ENCODE measurements at regions of chr19 and their contacts with region 1.

Region 1: DNA sequence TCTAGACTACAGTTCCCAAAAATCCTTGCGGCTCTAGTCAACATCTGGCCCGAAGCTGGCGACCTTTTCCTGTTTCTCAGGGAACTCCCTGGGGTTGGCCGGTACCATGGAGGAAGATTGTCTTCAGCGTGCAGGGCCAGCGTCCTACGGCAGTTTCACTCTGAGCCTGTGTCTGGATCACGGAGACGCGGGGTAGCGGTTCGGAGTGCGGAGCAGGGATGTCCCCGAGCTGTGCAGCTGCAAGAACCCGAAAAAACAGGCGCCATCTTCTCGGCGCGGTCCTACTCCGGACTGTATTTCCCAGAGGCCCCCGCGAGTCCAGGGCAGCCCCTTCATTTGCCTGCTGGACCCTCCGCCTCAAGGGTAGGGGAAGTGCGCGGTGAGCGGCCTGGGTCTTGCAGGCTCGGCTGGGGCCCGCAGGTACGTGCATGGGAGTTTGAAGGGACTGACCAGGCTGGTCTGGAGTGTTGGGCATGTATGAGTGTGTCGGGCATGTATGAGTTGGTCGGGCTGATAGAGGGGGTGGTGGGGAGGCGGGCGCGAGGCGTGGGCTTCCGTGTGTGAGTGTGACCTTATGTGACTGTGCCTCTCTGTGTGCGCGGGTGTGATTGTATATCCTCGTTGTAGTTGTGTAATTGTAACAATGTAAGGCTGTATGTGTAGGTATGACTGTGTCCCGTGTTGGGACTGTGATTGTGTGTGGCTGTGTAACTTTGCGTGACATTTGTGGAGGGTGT is at the start of gene ZNF383:
- DNase-seq: peak; percentile 95
- H3K4me3 Mint-ChIP-seq: peak within 1 kb of the TSS; percentile 97
- H3K27ac Mint-ChIP-seq: peak within 1 kb of the TSS; percentile 94
- H3K4me1 Mint-ChIP-seq: peaks cover 16% of the 10 kb centered on the region
- H3K27me3 Mint-ChIP-seq: no peaks in the 10 kb centered on the region
- total RNA-seq, gene ZNF383: 6.4 and 8.6 TPM in 2 replicates

Region 2: GRCh38 chr19:36489118-36489919 is 728.7 kb before region 1 on chr19 and contains the start of gene ZNF566:
- intact Hi-C with region 1: loop called (anchors 5 kb)
- DNase-seq: peak; percentile 97
- H3K4me3 Mint-ChIP-seq: peak within 1 kb of the TSS; percentile 99
- H3K27ac Mint-ChIP-seq: peak within 1 kb of the TSS; percentile 99
- H3K4me1 Mint-ChIP-seq: peaks cover 23% of the 10 kb centered on the region
- H3K27me3 Mint-ChIP-seq: no peaks in the 10 kb centered on the region
- total RNA-seq, gene ZNF566: 7.2 and 8.5 TPM in 2 replicates

Region 3: GRCh38 chr19:36605101-36605876 is 612.7 kb before region 1 on chr19 and contains the start of gene ZNF382:
- intact Hi-C with region 1: loop called (anchors 10 kb)
- DNase-seq: peak; percentile 96
- H3K4me3 Mint-ChIP-seq: peak within 1 kb of the TSS; percentile 89
- H3K27ac Mint-ChIP-seq: peak within 1 kb of the TSS; percentile 98
- H3K4me1 Mint-ChIP-seq: peaks cover 22% of the 10 kb centered on the region
- H3K27me3 Mint-ChIP-seq: no peaks in the 10 kb centered on the region
- total RNA-seq, gene ZNF382: 9.5 and 13.2 TPM in 2 replicates

Region 4: GRCh38 chr19:36837906-36838783 is 379.9 kb before region 1 on chr19 and contains the start of gene ZNF790:
- intact Hi-C with region 1: loop called (anchors 5 kb)
- DNase-seq: peak; percentile 94
- H3K4me3 Mint-ChIP-seq: no peak within 1 kb of the TSS
- H3K27ac Mint-ChIP-seq: peak within 1 kb of the TSS; percentile 49
- H3K4me1 Mint-ChIP-seq: peaks cover 4% of the 10 kb centered on the region
- H3K27me3 Mint-ChIP-seq: no peaks in the 10 kb centered on the region
- total RNA-seq, gene ZNF790: 5.1 and 6.7 TPM in 2 replicates

Region 5: GRCh38 chr19:36915992-36916830 is 301.8 kb before region 1 on chr19 and contains the starts of genes ZNF568 and ZNF829:
- intact Hi-C with region 1: loop called (anchors 1 kb)
- DNase-seq: peak; percentile 97
- H3K4me3 Mint-ChIP-seq: peak within 1 kb of the TSS; percentile 90
- H3K27ac Mint-ChIP-seq: peak within 1 kb of the TSS; percentile 96
- H3K4me1 Mint-ChIP-seq: peaks cover 19% of the 10 kb centered on the region
- H3K27me3 Mint-ChIP-seq: no peaks in the 10 kb centered on the region
- total RNA-seq, gene ZNF568: 4.4 and 6.1 TPM in 2 replicates
- total RNA-seq, gene ZNF829: 4.8 TPM in 2 replicates

Region 6: DNA sequence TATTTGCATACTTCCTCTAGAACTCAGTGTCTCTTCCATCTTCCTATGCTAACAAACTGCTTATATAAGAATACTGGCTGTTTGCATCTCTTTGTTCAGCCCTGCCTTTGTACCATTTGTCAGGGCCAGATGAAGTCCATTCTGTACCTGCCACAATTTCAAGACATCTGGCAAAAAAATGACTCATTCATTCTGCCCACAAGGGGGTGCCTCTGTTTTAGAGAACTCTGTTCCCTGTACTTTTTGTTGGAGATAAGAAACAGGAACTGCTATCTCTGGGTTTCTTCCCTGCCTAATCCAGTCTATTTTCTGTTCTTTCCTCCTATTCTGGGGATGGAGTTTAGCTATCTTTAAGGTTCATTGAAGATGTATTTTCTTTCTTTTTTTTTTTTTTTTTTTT is 278.9 kb before region 1 on chr19:
- intact Hi-C with region 1: no loop called
- DNase-seq: no peak
- H3K4me3 Mint-ChIP-seq: no peak overlapping the region
- H3K27ac Mint-ChIP-seq: no peak overlapping the region
- H3K4me1 Mint-ChIP-seq: no peaks in the 10 kb centered on the region
- H3K27me3 Mint-ChIP-seq: no peaks in the 10 kb centered on the region

Region 7: GRCh38 chr19:37172368-37173366 is 45.4 kb before region 1 on chr19 and contains the start of gene ZNF585A:
- intact Hi-C with region 1: loop called (anchors 1 kb)
- DNase-seq: peak; percentile 94
- H3K4me3 Mint-ChIP-seq: no peak within 1 kb of the TSS
- H3K27ac Mint-ChIP-seq: no peak within 1 kb of the TSS
- H3K4me1 Mint-ChIP-seq: no peaks in the 10 kb centered on the region
- H3K27me3 Mint-ChIP-seq: no peaks in the 10 kb centered on the region
- total RNA-seq, gene ZNF585A: 2.7 and 3.9 TPM in 2 replicates

Region 8: GRCh38 chr19:37303591-37304550 is 85.8 kb after region 1 on chr19:
- intact Hi-C with region 1: no loop called
- DNase-seq: no peak
- H3K4me3 Mint-ChIP-seq: no peak overlapping the region
- H3K27ac Mint-ChIP-seq: no peak overlapping the region
- H3K4me1 Mint-ChIP-seq: no peaks in the 10 kb centered on the region
- H3K27me3 Mint-ChIP-seq: no peaks in the 10 kb centered on the region

Region 9: DNA sequence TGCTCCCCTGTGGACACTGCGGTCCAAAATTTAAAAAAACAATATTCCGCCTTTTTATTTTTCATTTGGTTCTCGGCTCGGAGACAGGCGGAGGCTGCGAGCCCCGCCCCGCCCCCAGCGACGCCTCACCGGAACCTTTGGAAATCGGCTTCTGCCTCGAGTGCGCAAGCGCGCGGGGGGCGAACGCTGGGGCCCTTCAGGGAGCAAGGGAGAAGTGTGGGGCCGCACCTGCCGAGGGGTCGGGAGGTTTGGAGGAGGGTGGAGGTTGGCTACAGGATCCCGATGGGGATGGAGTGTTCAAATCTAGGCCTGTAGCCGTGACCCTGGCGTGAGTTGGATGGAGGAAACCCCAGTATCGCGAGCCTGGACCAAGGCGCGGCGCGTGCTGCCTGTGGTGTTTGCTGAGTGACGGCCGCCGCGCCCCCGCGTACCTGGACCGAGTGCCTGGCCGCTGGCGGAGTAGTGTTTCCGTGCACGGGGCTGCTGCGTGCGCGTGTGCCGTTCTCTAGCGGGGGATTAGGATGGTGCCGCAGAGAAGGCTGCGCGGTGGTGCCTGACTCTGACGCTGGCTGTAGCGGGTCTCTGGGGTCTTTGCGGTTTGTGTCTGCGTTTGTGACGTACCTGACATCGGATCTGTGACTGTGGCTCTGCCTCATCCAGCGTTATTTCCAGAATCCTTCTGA is 437.8 kb after region 1 on chr19:
- intact Hi-C with region 1: loop called (anchors 10 kb)
- DNase-seq: peak; percentile 96
- H3K4me3 Mint-ChIP-seq: peak overlapping the region; percentile 99
- H3K27ac Mint-ChIP-seq: peak overlapping the region; percentile 98
- H3K4me1 Mint-ChIP-seq: peaks cover 28% of the 10 kb centered on the region
- H3K27me3 Mint-ChIP-seq: no peaks in the 10 kb centered on the region